ENCODE measurements at regions of chr14 and their contacts with region 1.

Region 1: DNA sequence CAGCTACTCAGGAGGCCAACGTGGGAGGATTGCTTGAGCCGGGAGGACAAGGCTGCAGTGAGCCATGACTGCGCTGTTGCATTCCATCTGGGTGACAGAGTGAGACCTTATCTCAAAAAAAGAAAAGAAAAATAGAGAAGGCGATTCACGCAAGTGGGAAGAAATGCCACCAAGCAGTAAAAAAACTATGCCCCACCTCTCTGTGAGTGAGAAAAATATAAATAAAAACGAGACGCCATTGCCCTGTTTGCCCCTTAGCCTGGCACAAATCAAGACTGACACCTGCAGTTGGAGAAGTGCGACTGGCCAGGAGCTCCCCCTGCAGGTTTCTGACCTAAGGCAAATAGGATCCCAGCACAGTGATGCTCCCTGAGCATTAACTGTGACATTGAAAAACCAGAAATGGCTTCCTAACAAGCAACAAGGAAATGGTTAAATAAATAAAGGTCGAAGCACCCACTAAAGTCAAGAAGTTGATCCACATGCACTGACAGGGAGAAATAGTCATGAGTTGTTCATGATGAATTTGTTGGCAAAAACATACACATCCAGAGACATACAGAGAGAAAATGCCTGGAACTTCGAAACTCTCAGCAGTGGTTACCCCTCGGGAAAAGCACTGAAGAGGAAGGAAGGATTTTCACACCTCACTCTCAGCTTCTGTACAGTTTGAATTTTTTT is 21.1 kb downstream of the GSC start:
- DNase-seq: peak; percentile 73
- ATAC-seq: peak; percentile 94
- H3K4me3 Mint-ChIP-seq: no peak overlapping the region
- H3K27ac Mint-ChIP-seq: no peak overlapping the region
- H3K4me1 Mint-ChIP-seq: no peaks in the 10 kb centered on the region
- H3K27me3 Mint-ChIP-seq: no peaks in the 10 kb centered on the region; the same call in 1 of the 2 replicates
- CTCF ChIP-seq: 0 out of 2 replicates have a peak, but pooled peaks have one; percentile 37

Region 2: GRCh38 chr14:94689218-94689984 is 59.4 kb before region 1 on chr14:
- CTCF ChIA-PET with region 1: interaction called, 20 read pairs
- POLR2A ChIA-PET with region 1: no interaction called
- DNase-seq: peak; percentile 82
- ATAC-seq: peak; percentile 84
- H3K4me3 Mint-ChIP-seq: peak overlapping the region; percentile 38; the same call in 1 of the 2 replicates
- H3K27ac Mint-ChIP-seq: no peak overlapping the region
- H3K4me1 Mint-ChIP-seq: peaks cover 9% of the 10 kb centered on the region
- H3K27me3 Mint-ChIP-seq: peaks cover 24% of the 10 kb centered on the region
- CTCF ChIP-seq: peak; percentile 95

Region 3: GRCh38 chr14:94761348-94761996 is 12.7 kb after region 1 on chr14:
- CTCF ChIA-PET with region 1: interaction called, 20 read pairs
- POLR2A ChIA-PET with region 1: no interaction called
- DNase-seq: no peak
- ATAC-seq: no peak
- H3K4me3 Mint-ChIP-seq: no peak overlapping the region
- H3K27ac Mint-ChIP-seq: no peak overlapping the region
- H3K4me1 Mint-ChIP-seq: peaks cover 20% of the 10 kb centered on the region
- H3K27me3 Mint-ChIP-seq: peaks cover 46% of the 10 kb centered on the region
- CTCF ChIP-seq: no peak

Region 4: GRCh38 chr14:94769391-94770250 is 20.8 kb after region 1 on chr14 and contains the start of gene GSC:
- CTCF ChIA-PET with region 1: interaction called, 20 read pairs
- POLR2A ChIA-PET with region 1: no interaction called
- DNase-seq: peak; percentile 70
- ATAC-seq: peak; percentile 41
- H3K4me3 Mint-ChIP-seq: peak within 1 kb of the TSS; percentile 76
- H3K27ac Mint-ChIP-seq: no peak within 1 kb of the TSS
- H3K4me1 Mint-ChIP-seq: peaks cover 63% of the 10 kb centered on the region
- H3K27me3 Mint-ChIP-seq: peaks cover 98% of the 10 kb centered on the region
- CTCF ChIP-seq: no peak
- total RNA-seq, gene GSC: 1.6 to 4.4 TPM (median 2.0 TPM) in 3 replicates